Common myeloid progenitor, CD34-positive (primary cell): ENCODE measurements at regions of chr11 and their contacts with region 1.

Region 1: GRCh38 chr11:62591448-62592145 is at the start of gene TUT1:
- DNase-seq: peak; percentile 100
- H3K4me3 ChIP-seq: peak within 1 kb of the TSS; percentile 58 to 95 (median 89)
- H3K27ac ChIP-seq: peak within 1 kb of the TSS; percentile 93 to 99
- H3K4me1 ChIP-seq: peaks cover 16 to 35% (median 29%) of the 10 kb centered on the region in 4 experiments
- H3K27me3 ChIP-seq: no peaks in the 10 kb centered on the region

Region 2: DNA sequence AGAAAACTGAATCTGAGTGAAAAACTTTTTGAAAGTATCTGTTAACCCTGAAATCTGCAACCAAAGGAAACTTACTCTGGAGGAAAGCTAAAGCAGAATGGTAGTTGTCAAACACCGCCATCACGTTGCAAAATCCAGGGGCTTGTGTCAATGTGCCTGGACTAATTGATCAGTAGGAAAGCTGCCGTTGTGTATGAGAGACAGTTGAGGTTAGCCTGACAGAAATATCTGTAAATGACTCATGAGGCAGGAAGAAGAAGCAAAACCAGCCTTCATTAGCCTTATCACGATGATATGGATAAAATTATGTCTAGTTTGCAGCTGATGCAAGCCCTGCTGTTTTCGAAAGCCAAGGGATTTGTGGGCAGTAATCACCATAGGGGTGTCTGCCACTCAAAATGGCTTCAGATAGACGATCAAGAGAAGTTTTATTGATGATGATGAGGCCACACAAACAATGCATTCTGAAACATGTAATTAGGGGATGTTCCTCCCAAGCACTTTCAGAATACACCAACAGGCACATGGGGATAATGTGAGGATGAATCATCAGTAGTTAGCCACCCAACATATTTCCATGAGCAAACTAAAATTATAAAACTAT is 163.9 kb before region 1 on chr11:
- CTCF ChIA-PET with region 1: interaction called, 11 read pairs
- POLR2A ChIA-PET with region 1: no interaction called
- DNase-seq: peak; percentile 43 to 77 (median 57)
- H3K4me3 ChIP-seq: no peak overlapping the region
- H3K27ac ChIP-seq: peak overlapping the region in 1 of 2 experiments; percentile 18
- H3K4me1 ChIP-seq: peaks cover 0 to 43% (median 31%) of the 10 kb centered on the region in 4 experiments
- H3K27me3 ChIP-seq: no peaks in the 10 kb centered on the region

Region 3: GRCh38 chr11:62612366-62613290 is 21.0 kb after region 1 on chr11 and contains the starts of genes EML3 and ROM1:
- CTCF ChIA-PET with region 1: interaction called, 62 read pairs
- POLR2A ChIA-PET with region 1: interaction called, 8 read pairs
- DNase-seq: peak; percentile 88 to 95 (median 94)
- H3K4me3 ChIP-seq: peak within 1 kb of the TSS; percentile 52 to 94 (median 79)
- H3K27ac ChIP-seq: peak within 1 kb of the TSS; percentile 46 to 87
- H3K4me1 ChIP-seq: peaks cover 0 to 48% (median 34%) of the 10 kb centered on the region in 4 experiments
- H3K27me3 ChIP-seq: no peaks in the 10 kb centered on the region

Region 4: DNA sequence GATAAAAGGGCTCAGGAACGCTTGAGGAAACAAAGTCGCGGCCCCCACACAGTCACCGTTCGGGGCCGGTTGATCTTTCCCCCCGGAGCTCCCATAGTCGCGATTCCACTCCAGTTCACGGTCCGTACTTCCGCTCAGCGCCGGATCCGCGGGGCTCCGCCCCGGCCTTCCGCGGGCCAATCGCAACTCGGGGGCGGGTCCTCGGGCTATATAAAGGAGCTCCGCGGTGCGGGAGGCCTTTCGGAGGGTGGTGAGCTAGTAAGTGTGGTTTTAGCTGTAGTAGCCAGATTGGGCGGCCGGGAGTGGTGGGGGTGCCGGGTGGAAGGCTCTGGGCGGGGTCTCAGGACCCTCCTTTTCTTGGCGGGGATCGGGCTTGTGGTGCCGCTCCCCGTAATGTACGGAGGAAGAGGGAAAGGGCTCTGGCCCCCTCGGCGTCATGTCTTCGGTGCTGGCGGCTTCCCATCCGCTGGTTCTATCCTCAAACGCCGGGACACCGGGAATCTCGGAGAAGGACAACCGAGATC is 73.5 kb after region 1 on chr11 and contains the starts of genes C11orf98 and CSKMT:
- CTCF ChIA-PET with region 1: interaction called, 13 read pairs
- POLR2A ChIA-PET with region 1: interaction called, 19 read pairs
- DNase-seq: peak; percentile 94 to 97 (median 97)
- H3K4me3 ChIP-seq: peak within 1 kb of the TSS; percentile 79 to 99 (median 94)
- H3K27ac ChIP-seq: peak within 1 kb of the TSS; percentile 66 to 87
- H3K4me1 ChIP-seq: peaks cover 4 to 38% (median 28%) of the 10 kb centered on the region in 4 experiments
- H3K27me3 ChIP-seq: no peaks in the 10 kb centered on the region

Region 5: GRCh38 chr11:62694455-62695167 is 103.0 kb after region 1 on chr11:
- CTCF ChIA-PET with region 1: interaction called, 33 read pairs
- POLR2A ChIA-PET with region 1: no interaction called
- DNase-seq: peak; percentile 80 to 89 (median 83)
- H3K4me3 ChIP-seq: no peak overlapping the region
- H3K27ac ChIP-seq: no peak overlapping the region
- H3K4me1 ChIP-seq: no peaks in the 10 kb centered on the region
- H3K27me3 ChIP-seq: no peaks in the 10 kb centered on the region